Heart right ventricle (tissue), 16 donors: ENCODE measurements at regions of chr1 and their contacts with region 1.

Region 1: DNA sequence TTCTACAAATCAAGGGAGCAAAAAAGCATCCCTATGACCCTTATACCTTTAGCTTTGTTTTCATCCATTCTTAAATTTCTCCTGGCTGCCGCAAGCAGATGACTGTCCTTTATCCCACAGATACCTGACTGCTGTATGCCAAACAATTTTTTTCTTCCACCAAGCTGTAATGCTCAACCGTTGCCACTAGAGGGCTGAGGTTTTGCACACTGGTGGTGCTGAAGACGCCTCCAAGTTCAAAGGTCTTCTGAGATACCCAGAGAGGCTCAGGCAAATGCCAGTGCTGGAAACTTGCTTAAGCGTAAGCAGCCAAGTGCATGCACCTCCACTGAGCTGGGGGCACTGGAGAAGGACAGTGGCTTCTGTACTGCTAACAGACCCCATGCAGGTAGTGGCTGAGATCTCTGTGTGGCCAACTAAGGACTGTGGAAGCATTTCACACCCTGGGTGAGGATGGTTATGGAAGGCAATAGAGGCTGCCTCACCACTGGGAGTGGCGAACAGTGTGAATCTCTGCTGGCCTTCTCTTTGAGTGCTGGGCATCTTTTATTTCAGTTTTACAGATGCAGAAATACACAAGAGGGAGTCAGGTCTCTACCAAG is 28.5 kb downstream of the CNIH3 start:
- DNase-seq: peak in 1 of 2 donors; percentile 41
- ATAC-seq: peak in 7 of 8 donors; percentile 28 to 72 (median 52)
- H3K4me3 ChIP-seq: no peak overlapping the region
- H3K27ac ChIP-seq: no peak overlapping the region
- H3K4me1 ChIP-seq: peaks cover 0 to 8% (median 0%) of the 10 kb centered on the region in 9 donors
- H3K27me3 ChIP-seq: peaks cover 0 to 24% (median 0%) of the 10 kb centered on the region in 7 donors
- CTCF ChIP-seq: peak; percentile 79 to 88 (median 84)

Region 2: GRCh38 chr1:224851210-224851847 is 206.7 kb after region 1 on chr1:
- intact Hi-C with region 1: loop called (anchors 2 to 10 kb)
- DNase-seq: peak; percentile 18 to 44
- ATAC-seq: peak in 6 of 8 donors; percentile 7 to 53 (median 40)
- H3K4me3 ChIP-seq: no peak overlapping the region
- H3K27ac ChIP-seq: no peak overlapping the region
- H3K4me1 ChIP-seq: no peaks in the 10 kb centered on the region
- H3K27me3 ChIP-seq: peaks cover 0 to 7% (median 0%) of the 10 kb centered on the region in 7 donors
- CTCF ChIP-seq: peak; percentile 16 to 76 (median 54)

Region 3: DNA sequence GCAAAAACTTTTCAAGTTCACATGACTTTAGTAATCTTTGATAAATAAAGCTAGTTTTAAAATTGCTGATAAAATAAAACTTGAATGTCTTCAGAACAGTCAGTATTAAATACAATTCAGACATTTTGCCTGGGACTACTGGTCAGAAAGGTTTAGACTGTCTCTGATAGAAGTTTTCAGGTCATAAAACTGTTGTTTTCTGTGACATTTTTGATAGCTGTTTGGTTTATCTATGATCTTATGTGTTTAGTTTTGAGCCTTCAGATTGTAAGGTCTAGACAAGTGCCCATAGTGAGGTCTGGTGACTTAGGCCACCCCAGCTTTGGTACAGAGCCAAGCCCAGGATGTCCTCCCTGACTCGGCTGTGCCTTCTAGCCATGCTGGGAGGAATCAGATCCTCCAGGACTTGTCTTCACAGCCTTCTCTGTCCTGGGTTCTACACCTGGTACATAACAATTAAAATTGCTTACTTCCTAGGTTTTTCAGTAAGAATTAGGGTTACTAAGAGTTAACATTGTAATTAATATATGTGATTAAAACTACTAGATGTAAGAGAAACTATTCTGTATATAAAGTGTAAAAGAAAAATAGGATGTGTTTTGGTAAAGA is 269.7 kb after region 1 on chr1:
- intact Hi-C with region 1: loop called in 1 of 10 experiments (anchors 10 kb)
- DNase-seq: no peak
- ATAC-seq: no peak
- H3K4me3 ChIP-seq: no peak overlapping the region
- H3K27ac ChIP-seq: no peak overlapping the region
- H3K4me1 ChIP-seq: no peaks in the 10 kb centered on the region
- H3K27me3 ChIP-seq: no peaks in the 10 kb centered on the region
- CTCF ChIP-seq: no peak

Region 4: DNA sequence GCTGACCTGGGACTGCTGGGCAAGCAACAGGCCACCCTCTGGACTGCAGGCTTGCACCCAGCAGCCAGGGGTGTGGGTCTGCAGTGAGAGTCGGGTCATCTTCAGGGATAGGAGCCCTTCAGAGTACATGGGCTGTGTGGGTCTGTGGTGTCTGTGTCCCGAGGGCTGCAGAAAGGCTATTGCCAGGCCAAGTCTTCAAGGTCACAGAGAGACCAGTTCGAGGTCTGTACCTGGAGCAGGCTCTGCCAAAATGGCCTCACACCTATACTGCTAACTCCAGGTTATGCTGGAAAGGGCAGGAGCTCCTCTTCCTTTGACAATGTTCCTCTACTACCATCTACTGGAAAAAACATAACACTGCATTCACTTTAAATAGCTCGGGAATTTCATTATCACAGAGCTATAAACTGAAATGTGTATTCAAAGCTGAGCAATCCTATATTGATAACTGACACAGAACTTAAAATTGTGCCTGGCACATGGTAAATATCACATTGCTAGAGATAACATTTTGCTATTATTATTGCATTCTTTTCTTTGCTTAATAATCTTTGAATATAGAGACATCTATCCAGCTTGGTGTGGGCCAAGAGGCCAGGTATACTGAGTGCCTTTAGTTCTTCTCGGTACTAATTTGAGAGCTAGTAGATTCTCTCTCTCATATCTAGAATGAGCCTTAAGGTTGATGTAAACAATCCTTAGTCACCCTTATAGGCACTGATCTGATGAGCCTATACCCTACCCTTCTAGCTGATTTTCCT is 277.9 kb after region 1 on chr1:
- intact Hi-C with region 1: loop called in 2 of 10 experiments (anchors 10 kb)
- DNase-seq: no peak
- ATAC-seq: peak in 6 of 8 donors; percentile 24 to 65 (median 64)
- H3K4me3 ChIP-seq: no peak overlapping the region
- H3K27ac ChIP-seq: no peak overlapping the region
- H3K4me1 ChIP-seq: no peaks in the 10 kb centered on the region
- H3K27me3 ChIP-seq: peaks cover 0 to 3% (median 0%) of the 10 kb centered on the region in 7 donors
- CTCF ChIP-seq: peak; percentile 57 to 76 (median 69)